B cell (primary cell): ENCODE measurements at regions of chr9 and their contacts with region 1.

Region 1: DNA sequence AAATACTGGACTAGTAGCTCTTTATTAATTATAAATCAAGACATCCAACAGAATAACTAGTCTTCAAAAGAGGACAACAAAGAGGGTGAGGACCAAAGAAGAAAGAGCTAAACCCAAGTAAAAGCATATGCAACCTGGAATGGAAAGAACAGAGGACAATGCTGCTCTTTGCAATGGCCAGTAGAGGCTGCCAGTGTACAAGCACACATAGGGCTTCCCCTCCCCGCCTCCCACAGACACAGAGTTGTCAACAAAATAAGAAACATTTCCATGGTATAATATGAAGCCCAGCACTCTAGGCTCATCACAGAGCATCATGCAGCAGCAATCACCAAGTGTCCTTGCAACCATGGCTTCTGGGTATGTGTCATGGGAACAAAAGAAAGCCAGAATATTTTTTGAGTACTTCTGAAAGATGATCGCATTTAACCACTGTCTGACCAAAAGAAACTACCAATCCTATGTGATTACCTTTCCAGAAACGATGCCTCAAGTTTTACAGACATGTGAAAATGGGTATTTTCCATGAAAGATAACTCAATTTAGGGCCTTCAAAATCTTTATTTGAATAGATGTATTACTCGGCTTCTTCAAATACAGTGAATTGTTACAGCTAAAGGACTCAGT is 58.1 kb downstream of the RFX3 start:
- DNase-seq: peak; percentile 70
- ATAC-seq: peak; percentile 91
- H3K4me3 ChIP-seq: no peak overlapping the region
- H3K4me3 Mint-ChIP-seq: no peak overlapping the region
- H3K27ac ChIP-seq: no peak overlapping the region
- H3K27ac Mint-ChIP-seq: peak overlapping the region; percentile 76
- H3K4me1 ChIP-seq: peaks cover 4 to 6% of the 10 kb centered on the region in 2 donors
- H3K4me1 Mint-ChIP-seq: peaks cover 11% of the 10 kb centered on the region
- H3K27me3 ChIP-seq: no peaks in the 10 kb centered on the region
- H3K27me3 Mint-ChIP-seq: no peaks in the 10 kb centered on the region
- CTCF ChIP-seq: peak; percentile 90

Region 2: GRCh38 chr9:3478549-3478953 is 10.8 kb after region 1 on chr9:
- CTCF ChIA-PET with region 1: interaction called, 10 read pairs
- POLR2A ChIA-PET with region 1: no interaction called
- intact Hi-C with region 1: no loop called
- DNase-seq: peak; percentile 69
- ATAC-seq: peak; percentile 60
- H3K4me3 ChIP-seq: peak overlapping the region in 1 of 5 experiments; percentile 39
- H3K4me3 Mint-ChIP-seq: peak overlapping the region; percentile 62
- H3K27ac ChIP-seq: peak overlapping the region; percentile 61 to 63
- H3K27ac Mint-ChIP-seq: peak overlapping the region; percentile 86
- H3K4me1 ChIP-seq: peaks cover 52 to 57% of the 10 kb centered on the region in 2 donors
- H3K4me1 Mint-ChIP-seq: peaks cover 60% of the 10 kb centered on the region
- H3K27me3 ChIP-seq: no peaks in the 10 kb centered on the region
- H3K27me3 Mint-ChIP-seq: no peaks in the 10 kb centered on the region
- CTCF ChIP-seq: no peak

Region 3: DNA sequence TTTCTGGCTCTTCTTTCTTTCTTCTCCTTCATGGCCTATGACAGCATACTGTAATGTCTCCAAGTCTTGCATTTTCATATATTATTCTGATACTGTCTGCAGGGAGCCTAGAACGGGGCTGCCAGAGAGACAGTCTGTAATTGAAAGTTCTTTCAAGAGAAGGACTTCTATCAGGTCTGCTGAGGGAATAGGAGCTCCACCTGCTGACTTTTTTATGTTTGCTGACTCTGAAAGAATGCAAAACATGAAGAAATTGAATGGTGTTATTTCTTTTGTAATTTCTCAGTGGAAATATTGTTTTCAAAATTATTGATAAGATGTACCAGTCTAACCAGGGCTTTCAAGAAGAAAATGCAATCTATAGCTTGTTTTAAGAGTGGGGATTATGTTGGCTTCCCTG is 179.9 kb after region 1 on chr9:
- CTCF ChIA-PET with region 1: interaction called, 4 read pairs
- POLR2A ChIA-PET with region 1: no interaction called
- intact Hi-C with region 1: loop called (anchors 5 kb)
- DNase-seq: no peak
- ATAC-seq: no peak
- H3K4me3 ChIP-seq: no peak overlapping the region
- H3K4me3 Mint-ChIP-seq: no peak overlapping the region
- H3K27ac ChIP-seq: no peak overlapping the region
- H3K27ac Mint-ChIP-seq: no peak overlapping the region
- H3K4me1 ChIP-seq: no peaks in the 10 kb centered on the region
- H3K4me1 Mint-ChIP-seq: no peaks in the 10 kb centered on the region
- H3K27me3 ChIP-seq: no peaks in the 10 kb centered on the region
- H3K27me3 Mint-ChIP-seq: no peaks in the 10 kb centered on the region
- CTCF ChIP-seq: no peak

Region 4: DNA sequence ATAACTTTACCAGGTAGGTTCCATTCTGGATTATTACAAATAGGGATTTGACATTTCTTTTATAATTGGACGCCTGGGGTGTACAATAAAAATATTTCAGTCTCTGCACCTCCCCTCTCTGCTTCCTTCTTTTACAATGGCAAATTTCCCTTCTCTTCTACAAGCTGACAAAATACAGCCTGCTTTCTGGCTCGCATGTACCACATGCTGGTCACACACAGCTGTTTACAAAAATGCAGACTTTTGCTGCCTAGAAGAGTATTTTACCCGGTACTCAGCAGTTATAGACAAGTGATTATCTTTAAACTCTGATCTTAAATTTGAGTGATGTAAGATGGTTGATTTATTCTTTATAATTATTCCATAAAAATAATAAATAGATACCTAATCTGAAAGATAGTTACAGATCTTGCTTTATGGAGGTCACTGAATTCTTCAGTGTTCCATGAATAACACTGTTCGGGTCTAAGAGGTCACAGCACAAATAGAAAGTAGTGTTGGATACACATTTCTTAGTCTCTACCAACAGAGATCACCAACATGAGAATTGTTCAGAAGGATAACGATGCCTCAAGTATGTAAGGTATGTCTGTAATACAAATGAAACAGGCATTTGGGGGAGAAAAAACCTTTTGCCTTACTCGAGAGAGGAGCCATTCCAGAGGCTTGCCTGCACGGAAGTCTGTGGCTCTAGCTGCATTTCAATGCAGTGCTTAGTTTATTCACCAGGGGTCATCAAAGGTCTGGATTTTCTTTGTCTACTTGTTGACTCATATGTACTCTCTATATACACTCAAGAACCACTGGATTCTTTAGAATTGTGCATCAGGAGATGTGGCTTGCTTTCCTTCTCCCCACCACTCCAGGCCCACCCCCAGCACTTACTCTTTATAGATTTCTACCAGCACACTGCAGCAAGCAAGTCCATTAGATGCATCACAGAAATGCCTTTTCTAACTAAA is 264.7 kb after region 1 on chr9:
- CTCF ChIA-PET with region 1: no interaction called
- POLR2A ChIA-PET with region 1: no interaction called
- intact Hi-C with region 1: loop called (anchors 5 kb)
- DNase-seq: peak; percentile 41
- ATAC-seq: no peak
- H3K4me3 ChIP-seq: no peak overlapping the region
- H3K4me3 Mint-ChIP-seq: peak overlapping the region; percentile 46
- H3K27ac ChIP-seq: no peak overlapping the region
- H3K27ac Mint-ChIP-seq: no peak overlapping the region
- H3K4me1 ChIP-seq: no peaks in the 10 kb centered on the region
- H3K4me1 Mint-ChIP-seq: peaks cover 11% of the 10 kb centered on the region
- H3K27me3 ChIP-seq: no peaks in the 10 kb centered on the region
- H3K27me3 Mint-ChIP-seq: peaks cover 3% of the 10 kb centered on the region
- CTCF ChIP-seq: peak; percentile 51

Region 5: DNA sequence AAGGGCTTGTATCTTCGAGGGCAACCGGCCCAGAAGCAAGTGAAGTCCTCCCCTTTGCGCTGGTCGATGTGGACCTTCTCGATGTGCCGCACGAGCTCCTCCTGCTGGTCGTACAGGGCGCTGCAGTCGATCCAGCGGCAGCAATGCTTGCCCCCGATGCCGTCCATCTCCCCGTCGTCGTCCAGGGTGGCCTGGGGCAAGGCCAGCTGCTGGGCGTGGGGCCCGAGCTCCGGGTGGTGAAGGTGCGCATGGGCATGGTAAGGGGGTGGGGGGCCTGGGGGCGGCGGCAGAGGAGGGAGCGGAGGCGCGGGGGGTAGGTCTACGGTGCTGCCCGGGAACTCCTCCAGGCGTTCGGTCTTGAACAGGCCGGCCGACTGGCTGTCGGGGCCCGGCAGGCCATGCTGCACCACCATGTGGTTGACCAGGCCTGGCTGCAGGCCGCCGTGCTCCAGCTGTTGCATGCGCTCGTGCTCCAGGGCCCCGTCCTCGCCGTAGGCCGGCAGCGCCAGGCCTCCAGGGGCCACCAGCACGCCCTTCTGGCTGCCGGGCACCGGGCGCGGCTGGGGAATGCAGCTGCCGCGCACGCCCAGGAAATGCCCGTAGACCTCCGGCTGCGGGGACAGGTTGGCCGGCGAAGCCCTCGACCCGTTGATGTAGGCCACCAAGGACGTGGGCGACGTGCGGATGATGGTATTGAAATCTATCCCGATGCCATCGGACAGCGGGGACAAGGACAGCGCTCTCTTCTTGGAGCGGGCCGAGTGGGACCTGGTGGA is 650.3 kb after region 1 on chr9:
- CTCF ChIA-PET with region 1: interaction called, 5 read pairs
- POLR2A ChIA-PET with region 1: no interaction called
- intact Hi-C with region 1: loop called (anchors 2 kb)
- DNase-seq: peak; percentile 42
- ATAC-seq: no peak
- H3K4me3 ChIP-seq: no peak overlapping the region
- H3K4me3 Mint-ChIP-seq: no peak overlapping the region
- H3K27ac ChIP-seq: no peak overlapping the region
- H3K27ac Mint-ChIP-seq: no peak overlapping the region
- H3K4me1 ChIP-seq: no peaks in the 10 kb centered on the region
- H3K4me1 Mint-ChIP-seq: no peaks in the 10 kb centered on the region
- H3K27me3 ChIP-seq: no peaks in the 10 kb centered on the region
- H3K27me3 Mint-ChIP-seq: peaks cover 3% of the 10 kb centered on the region
- CTCF ChIP-seq: peak; percentile 65

Region 6: DNA sequence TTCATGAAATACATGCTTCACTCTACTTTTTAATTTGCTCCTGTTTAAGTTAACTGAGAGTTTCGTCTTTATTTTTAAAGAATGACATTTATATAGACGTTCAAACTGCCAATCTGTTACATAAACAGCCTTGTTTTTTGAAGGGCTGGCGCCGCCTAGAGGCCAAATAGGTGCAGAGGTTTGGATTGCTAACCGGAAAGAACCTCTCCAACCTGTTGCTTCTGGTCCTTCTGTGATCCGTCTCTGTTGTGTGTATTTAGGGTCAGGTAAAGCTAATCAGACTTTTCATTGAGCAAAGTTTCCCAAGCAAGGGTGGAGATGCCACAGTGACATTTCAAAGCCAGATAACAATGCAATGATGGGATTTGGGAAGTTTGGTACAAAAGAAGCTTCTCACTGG is 871.7 kb after region 1 on chr9:
- CTCF ChIA-PET with region 1: interaction called, 10 read pairs
- POLR2A ChIA-PET with region 1: no interaction called
- intact Hi-C with region 1: no loop called
- DNase-seq: peak; percentile 58
- ATAC-seq: peak; percentile 39
- H3K4me3 ChIP-seq: no peak overlapping the region
- H3K4me3 Mint-ChIP-seq: no peak overlapping the region
- H3K27ac ChIP-seq: no peak overlapping the region
- H3K27ac Mint-ChIP-seq: no peak overlapping the region
- H3K4me1 ChIP-seq: peaks cover 0 to 2% of the 10 kb centered on the region in 2 donors
- H3K4me1 Mint-ChIP-seq: peaks cover 3% of the 10 kb centered on the region
- H3K27me3 ChIP-seq: no peaks in the 10 kb centered on the region
- H3K27me3 Mint-ChIP-seq: peaks cover 33% of the 10 kb centered on the region
- CTCF ChIP-seq: peak; percentile 74